ENCODE measurements at regions of chr10 and their contacts with region 1.

Region 1: DNA sequence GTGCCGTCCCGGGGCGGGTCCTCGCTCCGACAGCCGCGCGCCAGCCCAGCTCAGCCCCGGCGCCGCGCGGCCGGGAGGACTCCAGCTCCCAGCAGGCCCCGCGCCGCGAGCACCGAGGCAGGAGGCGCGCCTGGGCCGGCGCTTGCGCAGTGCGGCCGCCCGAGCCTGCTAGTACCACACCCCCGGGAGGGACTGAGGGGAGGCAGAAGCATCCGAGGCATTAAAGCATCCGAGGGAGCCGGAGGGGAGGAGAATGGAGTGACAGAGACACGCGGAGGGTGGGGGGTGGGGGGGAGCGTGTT is at the start of gene GRK5:
- DNase-seq: peak; percentile 97
- H3K4me3 Mint-ChIP-seq: peak within 1 kb of the TSS; percentile 98
- H3K27ac Mint-ChIP-seq: peak within 1 kb of the TSS; percentile 100
- H3K4me1 Mint-ChIP-seq: peaks cover 41% of the 10 kb centered on the region
- H3K27me3 Mint-ChIP-seq: no peaks in the 10 kb centered on the region
- total RNA-seq, gene GRK5: 24.4 and 24.7 TPM in 2 replicates

Region 2: GRCh38 chr10:119221201-119221600 is 13.9 kb after region 1 on chr10:
- intact Hi-C with region 1: loop called (anchors 1 kb)
- DNase-seq: no peak
- H3K4me3 Mint-ChIP-seq: no peak overlapping the region
- H3K27ac Mint-ChIP-seq: no peak overlapping the region
- H3K4me1 Mint-ChIP-seq: peaks cover 32% of the 10 kb centered on the region
- H3K27me3 Mint-ChIP-seq: no peaks in the 10 kb centered on the region

Region 3: GRCh38 chr10:119268871-119269506 is 61.7 kb after region 1 on chr10:
- intact Hi-C with region 1: loop called (anchors 1 kb)
- DNase-seq: peak; percentile 77
- H3K4me3 Mint-ChIP-seq: peak overlapping the region; percentile 53
- H3K27ac Mint-ChIP-seq: peak overlapping the region; percentile 99
- H3K4me1 Mint-ChIP-seq: peaks cover 47% of the 10 kb centered on the region
- H3K27me3 Mint-ChIP-seq: no peaks in the 10 kb centered on the region

Region 4: GRCh38 chr10:119416855-119417254 is 209.5 kb after region 1 on chr10:
- intact Hi-C with region 1: loop called (anchors 1 kb)
- DNase-seq: peak; percentile 54
- H3K4me3 Mint-ChIP-seq: no peak overlapping the region
- H3K27ac Mint-ChIP-seq: no peak overlapping the region
- H3K4me1 Mint-ChIP-seq: no peaks in the 10 kb centered on the region
- H3K27me3 Mint-ChIP-seq: no peaks in the 10 kb centered on the region

Region 5: DNA sequence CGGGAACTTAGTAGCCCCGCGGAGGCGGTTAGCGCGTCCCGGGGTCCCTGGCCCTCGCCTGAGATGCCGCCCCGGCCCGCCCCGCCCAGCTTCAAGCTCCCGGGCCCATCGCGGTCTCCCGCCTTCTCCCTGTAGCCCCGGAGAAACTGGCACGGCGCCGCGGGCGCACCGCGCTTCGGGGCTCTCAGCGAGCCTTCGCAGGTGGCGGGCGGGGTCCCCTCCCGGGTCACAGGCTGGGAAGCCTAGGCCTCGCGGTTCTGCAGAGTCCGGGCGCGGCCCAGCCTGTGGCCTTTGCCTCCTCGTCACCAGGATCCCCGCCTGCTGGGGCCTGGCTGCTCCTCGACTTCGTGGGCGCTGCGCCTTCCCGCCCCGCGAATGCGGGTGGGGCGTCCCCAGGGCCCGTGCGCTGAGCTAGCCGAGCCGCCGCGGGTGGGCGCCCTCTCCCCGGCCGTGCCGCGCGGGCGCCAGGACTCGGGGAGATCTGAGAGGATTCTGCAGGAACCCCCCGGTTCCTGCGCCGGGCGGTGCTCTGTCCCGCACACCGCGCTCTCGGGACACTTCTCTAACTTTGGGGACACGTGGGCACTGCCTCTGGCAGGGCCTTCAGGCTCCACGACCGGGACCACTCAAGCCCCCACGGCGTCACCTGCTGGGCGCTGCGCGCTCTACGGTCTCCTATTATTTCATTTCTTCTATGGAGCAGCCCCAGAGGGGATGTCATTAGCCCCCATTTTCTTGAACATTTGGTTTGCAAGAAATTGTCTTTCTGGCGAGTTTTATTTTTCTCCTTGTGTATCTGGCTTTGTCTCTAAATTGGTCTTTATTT is 335.9 kb after region 1 on chr10:
- intact Hi-C with region 1: loop called (anchors 2 kb)
- DNase-seq: peak; percentile 52
- H3K4me3 Mint-ChIP-seq: peak overlapping the region; percentile 88
- H3K27ac Mint-ChIP-seq: peak overlapping the region; percentile 86
- H3K4me1 Mint-ChIP-seq: peaks cover 39% of the 10 kb centered on the region
- H3K27me3 Mint-ChIP-seq: peaks cover 18% of the 10 kb centered on the region